Sigmoid colon (tissue), 7 donors: ENCODE measurements at regions of chr5 and their contacts with region 1.

Region 1: DNA sequence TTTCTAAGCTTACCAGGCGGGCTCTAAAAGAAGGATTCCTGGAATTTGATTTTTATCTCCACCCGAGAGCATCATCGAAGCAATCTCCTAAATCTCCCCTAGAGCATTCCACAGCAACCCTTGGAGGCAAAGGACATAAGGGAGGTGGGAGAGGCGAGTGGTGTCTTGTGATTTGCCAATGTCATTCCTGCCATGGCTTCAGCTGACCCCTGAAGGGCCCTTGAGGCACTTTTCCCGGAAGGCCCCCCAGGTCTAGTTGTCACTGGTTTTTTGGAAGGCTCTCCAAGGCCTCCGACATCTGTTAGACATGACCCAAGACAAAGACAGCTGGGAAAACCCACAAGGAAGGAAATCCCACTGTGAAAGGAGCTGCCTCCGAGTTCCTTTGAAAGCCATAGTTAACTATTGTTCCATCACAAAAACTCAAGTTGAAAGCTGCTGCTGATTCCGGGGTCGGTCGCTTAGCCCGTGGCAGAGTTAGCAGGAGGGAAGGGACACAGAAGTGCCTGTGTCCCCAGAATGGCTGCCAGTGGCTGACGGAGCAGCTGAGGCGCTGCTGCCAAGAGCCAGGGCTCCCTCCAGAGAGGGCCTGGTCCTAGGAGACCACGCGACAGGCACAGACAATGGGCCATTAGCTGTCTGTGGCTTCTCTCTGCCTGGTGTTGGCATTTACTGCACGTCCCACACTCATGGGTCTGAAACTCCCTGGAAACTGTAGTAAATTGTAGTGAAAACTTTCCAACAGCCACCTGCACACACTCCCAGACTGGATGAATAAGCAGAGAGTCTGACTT is 24.4 kb upstream of the TRIO start:
- DNase-seq: no peak
- H3K4me3 ChIP-seq: no peak overlapping the region
- H3K27ac ChIP-seq: no peak overlapping the region
- H3K4me1 ChIP-seq: no peaks in the 10 kb centered on the region
- H3K27me3 ChIP-seq: no peaks in the 10 kb centered on the region
- CTCF ChIP-seq: no peak
- EP300 ChIP-seq: no peak
- POLR2A ChIP-seq: no peak

Region 2: DNA sequence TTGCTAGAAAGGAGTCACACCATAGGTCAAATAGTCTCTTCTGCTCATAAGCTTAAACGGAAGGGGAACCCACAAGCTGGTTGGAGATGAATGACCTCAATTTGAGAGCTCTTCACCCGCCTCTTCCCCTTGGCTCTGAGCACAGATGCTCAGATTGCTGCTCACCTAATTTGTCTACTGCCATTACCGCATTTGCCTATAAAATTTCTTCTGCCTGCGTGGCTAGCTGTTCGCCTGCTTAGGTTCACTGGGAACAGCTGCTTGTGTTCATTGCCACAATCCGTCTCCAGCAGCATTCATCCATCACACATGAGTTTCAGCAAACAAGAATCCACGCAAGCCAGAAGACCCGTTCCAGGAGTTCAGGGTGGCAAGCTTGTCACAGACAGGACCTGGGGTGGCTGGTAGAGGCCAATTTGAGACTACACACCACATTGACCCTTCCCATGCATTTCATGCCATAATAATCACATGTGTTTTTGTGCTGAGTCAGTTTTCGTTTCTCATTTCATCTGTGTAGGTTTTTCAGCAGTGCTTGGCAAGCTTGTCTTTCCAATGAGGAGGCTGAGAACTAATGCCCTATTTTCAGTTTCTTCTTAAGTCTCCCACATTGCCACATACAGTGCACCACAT is 124.0 kb before region 1 on chr5:
- intact Hi-C with region 1: loop called (anchors 10 kb)
- DNase-seq: no peak
- H3K4me3 ChIP-seq: no peak overlapping the region
- H3K27ac ChIP-seq: no peak overlapping the region
- H3K4me1 ChIP-seq: no peaks in the 10 kb centered on the region
- H3K27me3 ChIP-seq: no peaks in the 10 kb centered on the region
- CTCF ChIP-seq: no peak
- EP300 ChIP-seq: no peak
- POLR2A ChIP-seq: no peak

Region 3: GRCh38 chr5:14035859-14036440 is 82.8 kb before region 1 on chr5:
- intact Hi-C with region 1: no loop called
- DNase-seq: no peak
- H3K4me3 ChIP-seq: peak overlapping the region in 3 of 4 donors; percentile 15 to 26 (median 20)
- H3K27ac ChIP-seq: peak overlapping the region; percentile 62 to 81 (median 68)
- H3K4me1 ChIP-seq: peaks cover 0 to 39% (median 23%) of the 10 kb centered on the region in 4 donors
- H3K27me3 ChIP-seq: no peaks in the 10 kb centered on the region
- CTCF ChIP-seq: no peak
- EP300 ChIP-seq: no peak
- POLR2A ChIP-seq: no peak

Region 4: DNA sequence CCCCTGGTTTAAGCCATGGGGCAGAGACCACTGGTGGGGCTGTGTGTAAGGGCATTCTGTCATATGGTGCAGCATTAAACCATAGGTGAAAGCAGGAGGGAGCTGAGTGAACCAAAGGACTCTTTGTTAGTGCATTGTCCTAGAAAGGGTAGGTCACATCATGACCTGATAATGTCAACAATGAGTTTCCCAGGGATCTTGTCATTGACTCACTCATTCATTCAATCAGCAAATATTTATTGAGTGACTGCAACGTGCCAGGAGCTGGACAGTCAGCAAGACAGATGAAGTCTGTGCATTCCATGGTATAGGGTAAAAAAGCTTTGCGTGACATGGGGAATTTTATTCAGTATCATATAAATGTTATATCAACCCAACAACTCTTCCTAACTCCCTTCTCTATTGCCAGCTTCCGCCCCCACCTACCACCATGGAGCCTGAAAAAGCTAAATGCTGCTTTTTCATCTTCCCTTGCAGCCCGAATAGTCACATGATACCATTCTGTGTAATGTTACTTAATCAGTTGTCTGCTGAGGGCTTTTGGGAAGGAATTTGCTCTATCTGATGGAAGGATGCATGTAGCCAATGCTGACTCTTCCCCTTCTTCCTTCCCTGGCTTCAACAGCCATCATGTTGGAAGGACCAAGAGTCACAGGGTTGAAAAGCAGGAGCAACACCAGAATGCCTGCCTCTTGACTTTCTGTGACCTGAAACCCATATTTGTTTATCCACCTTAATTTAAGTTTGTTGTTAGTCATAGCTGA is 451.4 kb after region 1 on chr5:
- intact Hi-C with region 1: no loop called
- DNase-seq: no peak
- H3K4me3 ChIP-seq: no peak overlapping the region
- H3K27ac ChIP-seq: no peak overlapping the region
- H3K4me1 ChIP-seq: no peaks in the 10 kb centered on the region
- H3K27me3 ChIP-seq: no peaks in the 10 kb centered on the region
- CTCF ChIP-seq: no peak
- EP300 ChIP-seq: no peak
- POLR2A ChIP-seq: no peak

Region 5: GRCh38 chr5:14664302-14665100 is 545.8 kb after region 1 on chr5 and contains the start of gene OTULIN:
- intact Hi-C with region 1: loop called (anchors 10 kb)
- DNase-seq: peak; percentile 95
- H3K4me3 ChIP-seq: peak within 1 kb of the TSS; percentile 61 to 79 (median 69)
- H3K27ac ChIP-seq: peak within 1 kb of the TSS; percentile 85 to 95 (median 92)
- H3K4me1 ChIP-seq: peaks cover 0 to 40% (median 33%) of the 10 kb centered on the region in 4 donors
- H3K27me3 ChIP-seq: no peaks in the 10 kb centered on the region
- CTCF ChIP-seq: no peak
- EP300 ChIP-seq: peak in 1 of 4 donors; percentile 8
- POLR2A ChIP-seq: peak; percentile 62 to 79
- total RNA-seq, gene OTULIN: 12.9 to 37.9 (median 19.8) TPM